ENCODE measurements at regions of chr1 and their contacts with region 1.

Region 1: DNA sequence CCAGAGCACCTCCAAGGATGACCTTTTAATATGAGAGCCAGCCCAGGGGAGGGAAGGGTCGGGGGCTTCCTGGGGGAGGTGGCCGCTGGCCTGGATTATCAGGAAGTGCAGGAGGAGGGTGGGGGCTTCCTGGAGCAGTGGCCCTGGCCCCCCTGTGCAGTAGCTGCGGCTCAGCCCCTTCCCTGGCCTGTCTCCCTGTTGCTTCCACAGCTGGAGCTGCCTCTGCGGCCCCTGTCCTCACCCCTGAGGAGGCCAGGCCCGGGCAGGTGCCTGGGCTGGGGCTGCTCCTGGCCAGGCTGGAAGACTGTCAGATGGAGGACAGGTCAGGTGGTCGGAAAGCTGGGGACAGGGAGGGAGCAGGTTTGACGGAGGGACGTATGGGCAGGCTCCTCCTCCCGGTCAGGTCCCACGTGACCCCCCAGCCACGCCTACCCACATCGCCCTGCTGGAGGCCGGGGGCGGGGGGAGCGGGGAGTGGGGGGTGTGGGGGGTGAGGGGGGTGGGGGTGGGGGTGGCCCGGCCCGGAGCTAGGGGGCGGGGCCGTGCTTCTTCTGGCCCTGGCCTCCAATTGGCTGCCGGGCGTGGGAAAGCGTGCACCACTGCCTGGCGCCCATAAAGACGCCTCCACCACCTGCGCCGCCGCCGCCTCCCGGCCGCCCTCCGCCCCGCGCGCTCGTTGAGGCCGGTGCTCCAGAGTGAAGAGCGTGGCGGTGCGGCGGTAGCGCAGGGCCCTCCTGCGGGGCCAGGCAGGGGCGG is 10.2 kb upstream of the TNFRSF14 start:
- DNase-seq: peak; percentile 91
- H3K4me3 ChIP-seq: peak overlapping the region; percentile 49
- H3K27ac ChIP-seq: peak overlapping the region; percentile 76
- H3K4me1 ChIP-seq: peaks cover 29% of the 10 kb centered on the region
- H3K27me3 ChIP-seq: no peaks in the 10 kb centered on the region
- CTCF ChIP-seq: no peak

Region 2: DNA sequence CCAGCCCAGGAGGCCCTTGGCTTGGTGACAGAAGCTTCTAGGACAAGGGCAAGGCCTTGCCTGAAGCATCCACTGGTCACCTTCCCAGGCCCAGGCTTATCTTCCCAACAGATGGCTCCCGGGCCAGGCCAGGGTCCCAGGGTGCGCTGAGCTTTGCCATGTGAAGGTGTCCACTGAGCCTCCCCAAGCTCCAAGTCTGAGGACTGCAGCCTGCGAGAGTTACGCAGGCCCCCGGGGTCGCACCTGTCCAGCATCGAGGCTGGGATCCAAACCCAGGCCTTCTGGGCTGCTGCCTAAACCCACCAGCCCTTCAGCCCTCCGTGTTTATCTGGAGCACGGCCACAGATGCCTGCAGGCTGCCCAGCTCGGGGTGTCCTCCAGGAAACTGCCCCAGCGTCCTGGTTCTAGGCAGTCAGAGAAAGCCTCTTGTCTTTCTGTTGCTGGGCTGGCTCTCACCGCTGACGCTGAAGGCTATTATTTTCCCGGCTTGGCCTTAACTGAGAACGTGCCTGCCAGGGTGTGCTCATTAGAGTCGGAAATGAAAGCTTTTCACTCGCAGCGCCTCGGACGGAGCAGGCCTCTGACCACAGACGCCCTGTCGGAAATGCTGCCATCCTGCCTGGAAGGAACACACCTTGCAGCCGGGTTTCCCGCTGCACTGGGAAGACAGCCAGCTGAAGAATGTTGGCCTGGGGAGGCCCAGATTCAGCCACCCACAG is 993.9 kb after region 1 on chr1:
- CTCF ChIA-PET with region 1: interaction called, 10 read pairs
- POLR2A ChIA-PET with region 1: no interaction called
- intact Hi-C with region 1: no loop called
- DNase-seq: no peak
- H3K4me3 ChIP-seq: no peak overlapping the region
- H3K27ac ChIP-seq: no peak overlapping the region
- H3K4me1 ChIP-seq: no peaks in the 10 kb centered on the region
- H3K27me3 ChIP-seq: no peaks in the 10 kb centered on the region
- CTCF ChIP-seq: no peak

Measured in A673 (cell line).